ENCODE measurements at regions of chr11 and their contacts with region 1.

Region 1: GRCh38 chr11:45102810-45103621 is 43.4 kb upstream of the PRDM11 start:
- DNase-seq: peak; percentile 62
- H3K4me3 Mint-ChIP-seq: peak overlapping the region; percentile 38
- H3K27ac Mint-ChIP-seq: no peak overlapping the region
- H3K4me1 Mint-ChIP-seq: peaks cover 16% of the 10 kb centered on the region
- H3K27me3 Mint-ChIP-seq: peaks cover 8% of the 10 kb centered on the region

Region 2: DNA sequence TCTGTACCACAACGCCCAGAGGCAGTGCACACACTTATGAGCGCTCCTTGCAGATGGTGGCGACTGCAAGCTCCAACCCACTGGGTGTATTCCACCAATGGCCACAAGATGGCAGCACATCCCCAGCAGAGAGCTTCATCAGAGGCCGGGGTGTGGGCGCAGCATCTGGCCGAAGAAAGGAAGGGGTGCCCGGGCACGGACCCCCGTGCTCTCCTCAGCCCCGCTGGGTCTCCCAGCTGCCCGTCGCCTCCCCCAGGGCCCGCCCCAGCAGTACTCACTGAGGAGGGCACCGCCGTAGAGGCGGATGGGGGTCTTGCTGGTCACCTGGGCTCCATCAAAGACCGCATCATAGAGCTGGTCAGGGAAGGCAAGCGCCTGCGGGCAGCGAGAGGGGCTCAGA is 166.5 kb before region 1 on chr11:
- CTCF ChIA-PET with region 1: interaction called, 441 read pairs
- POLR2A ChIA-PET with region 1: no interaction called
- DNase-seq: peak; percentile 82
- H3K4me3 Mint-ChIP-seq: no peak overlapping the region
- H3K27ac Mint-ChIP-seq: no peak overlapping the region
- H3K4me1 Mint-ChIP-seq: no peaks in the 10 kb centered on the region
- H3K27me3 Mint-ChIP-seq: no peaks in the 10 kb centered on the region

Region 3: DNA sequence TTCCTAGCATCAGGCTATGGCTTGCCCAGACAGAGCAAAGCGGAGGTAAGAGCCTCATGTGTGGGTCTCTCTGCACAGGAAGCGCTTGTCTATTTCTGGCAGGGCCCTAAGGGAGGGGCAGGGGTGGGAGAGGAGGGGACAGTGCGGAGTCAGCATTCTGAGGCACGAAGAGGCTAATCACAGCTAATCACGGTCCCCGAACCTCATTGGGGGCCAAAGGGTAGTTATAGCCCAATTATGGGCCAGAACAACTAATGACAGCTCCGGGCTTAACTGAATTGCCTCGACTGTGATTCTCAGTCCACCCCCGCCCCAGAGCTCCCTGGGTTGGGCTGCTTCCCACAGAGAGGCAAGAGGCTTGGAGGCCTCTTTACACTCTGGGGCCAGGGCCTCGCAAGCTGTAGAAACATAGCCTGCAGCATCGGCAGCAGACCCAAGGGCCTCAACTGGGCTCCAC is 29.3 kb before region 1 on chr11:
- CTCF ChIA-PET with region 1: no interaction called
- POLR2A ChIA-PET with region 1: no interaction called
- DNase-seq: no peak
- H3K4me3 Mint-ChIP-seq: no peak overlapping the region
- H3K27ac Mint-ChIP-seq: no peak overlapping the region
- H3K4me1 Mint-ChIP-seq: peaks cover 7% of the 10 kb centered on the region
- H3K27me3 Mint-ChIP-seq: no peaks in the 10 kb centered on the region